Posterior vena cava (tissue), 2 donors: ENCODE measurements at regions of chr15 and their contacts with region 1.

Region 1: DNA sequence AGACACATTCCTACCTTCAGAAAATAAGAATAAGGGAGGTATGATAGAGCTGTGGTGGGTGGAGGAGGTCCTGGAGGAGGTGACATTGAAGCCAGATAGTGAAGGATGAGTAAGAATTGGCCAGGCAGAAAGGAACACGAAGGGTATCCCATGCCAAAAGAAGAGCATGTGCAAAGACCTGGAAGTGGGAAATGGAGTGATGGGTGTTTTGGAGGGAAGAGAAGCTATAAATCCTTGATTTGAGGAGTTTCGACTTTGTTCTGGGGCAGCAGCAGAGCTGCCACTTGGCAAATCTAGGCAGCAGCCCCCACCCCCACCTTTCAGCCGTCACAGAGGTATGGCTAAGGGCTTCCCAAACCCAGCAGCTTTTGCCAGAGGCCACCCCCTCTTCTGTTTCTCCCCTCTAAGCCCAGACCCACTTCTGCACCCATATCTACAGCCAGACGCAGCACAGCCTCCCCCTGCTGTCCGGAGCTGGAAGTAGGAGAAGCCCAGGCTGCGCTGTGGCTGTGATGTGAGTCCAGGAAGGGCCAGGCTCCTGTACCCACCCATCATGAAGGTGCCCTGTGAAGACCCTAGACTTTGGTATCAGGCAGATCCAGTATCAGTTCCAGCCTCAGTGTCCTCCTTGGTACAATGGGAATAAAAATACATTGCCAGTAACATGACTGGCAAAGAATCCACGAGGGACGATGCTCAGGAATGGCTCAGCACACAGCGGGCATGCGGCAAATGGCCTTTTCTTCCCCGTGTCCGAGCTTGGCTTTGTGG is 188.7 kb upstream of the LINGO1 start:
- DNase-seq: no peak

Region 2: DNA sequence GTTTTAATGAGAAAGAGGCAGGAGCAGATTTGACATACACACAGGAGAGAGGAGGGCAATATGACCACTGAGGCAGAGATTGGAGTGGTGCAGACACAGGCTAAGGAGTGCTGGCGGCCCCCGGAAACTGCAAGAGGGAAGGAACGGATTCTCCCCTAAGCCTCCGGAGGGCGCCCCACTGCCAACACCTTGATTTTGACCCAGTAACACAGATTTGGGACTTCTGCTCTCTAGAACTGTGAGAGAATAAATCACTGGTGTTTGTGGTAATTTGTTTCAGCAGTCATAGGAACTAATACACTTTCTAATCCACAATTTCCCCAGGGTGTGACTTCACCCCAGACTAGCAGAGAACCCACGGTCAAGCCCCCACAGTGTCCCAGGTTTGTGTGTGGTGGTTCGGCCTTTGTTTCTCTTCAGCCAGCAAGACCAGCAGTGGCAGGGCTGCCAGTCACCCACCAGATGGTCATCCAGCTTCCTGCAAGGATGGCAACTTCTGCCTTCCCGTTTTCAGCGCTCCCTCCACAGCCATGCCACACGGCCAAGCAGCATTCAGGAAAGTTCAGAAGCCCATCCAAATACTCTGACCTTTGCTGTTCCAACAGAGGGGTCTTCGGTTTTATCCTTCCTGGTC is 726.9 kb before region 1 on chr15:
- intact Hi-C with region 1: no loop called
- DNase-seq: no peak

Region 3: DNA sequence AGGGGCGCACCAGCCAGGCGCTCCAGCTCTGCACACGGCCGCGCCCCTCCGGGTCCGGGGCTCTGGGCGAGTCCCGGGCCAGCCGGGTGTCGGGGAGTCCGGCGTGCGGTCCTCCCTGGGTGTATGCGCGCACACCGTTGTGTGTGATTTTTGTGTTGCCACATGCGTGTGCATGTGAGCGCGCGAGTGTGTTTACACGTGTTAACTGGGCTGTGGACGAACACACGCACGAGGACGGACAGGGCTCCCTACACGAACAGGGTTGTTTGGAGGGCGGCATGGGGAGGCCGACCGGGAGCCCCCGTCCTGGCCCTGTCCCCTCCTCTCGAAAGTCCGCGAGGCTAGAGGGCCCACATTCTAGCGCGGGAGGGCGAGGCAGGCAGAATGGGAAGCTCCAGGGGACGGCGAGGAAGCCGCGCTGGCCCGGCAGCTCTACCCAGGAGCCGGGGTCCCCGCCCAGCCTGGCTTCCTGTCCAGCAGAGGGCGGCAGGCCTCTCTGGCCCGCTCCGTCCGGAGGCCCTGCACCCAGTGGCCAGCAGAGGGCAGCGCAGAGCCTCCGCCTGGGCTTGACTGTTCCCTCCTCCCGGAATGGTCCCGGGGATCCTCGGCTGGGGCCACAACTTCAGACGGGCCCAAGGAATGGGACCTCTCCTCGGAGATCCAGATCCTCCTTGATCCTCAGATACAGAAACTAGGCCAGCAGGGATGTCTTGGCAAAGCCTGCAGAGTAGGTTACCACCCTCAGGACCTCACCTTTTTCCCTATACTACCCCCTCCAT is 188.1 kb before region 1 on chr15:
- intact Hi-C with region 1: loop called in 1 of 2 experiments (anchors 5 kb)
- DNase-seq: peak; percentile 96

Region 4: GRCh38 chr15:77843546-77843945 is 22.2 kb after region 1 on chr15:
- intact Hi-C with region 1: loop called in 1 of 2 experiments (anchors 1 kb)
- DNase-seq: no peak